ENCODE measurements at regions of chr1 and their contacts with region 1.

Region 1: DNA sequence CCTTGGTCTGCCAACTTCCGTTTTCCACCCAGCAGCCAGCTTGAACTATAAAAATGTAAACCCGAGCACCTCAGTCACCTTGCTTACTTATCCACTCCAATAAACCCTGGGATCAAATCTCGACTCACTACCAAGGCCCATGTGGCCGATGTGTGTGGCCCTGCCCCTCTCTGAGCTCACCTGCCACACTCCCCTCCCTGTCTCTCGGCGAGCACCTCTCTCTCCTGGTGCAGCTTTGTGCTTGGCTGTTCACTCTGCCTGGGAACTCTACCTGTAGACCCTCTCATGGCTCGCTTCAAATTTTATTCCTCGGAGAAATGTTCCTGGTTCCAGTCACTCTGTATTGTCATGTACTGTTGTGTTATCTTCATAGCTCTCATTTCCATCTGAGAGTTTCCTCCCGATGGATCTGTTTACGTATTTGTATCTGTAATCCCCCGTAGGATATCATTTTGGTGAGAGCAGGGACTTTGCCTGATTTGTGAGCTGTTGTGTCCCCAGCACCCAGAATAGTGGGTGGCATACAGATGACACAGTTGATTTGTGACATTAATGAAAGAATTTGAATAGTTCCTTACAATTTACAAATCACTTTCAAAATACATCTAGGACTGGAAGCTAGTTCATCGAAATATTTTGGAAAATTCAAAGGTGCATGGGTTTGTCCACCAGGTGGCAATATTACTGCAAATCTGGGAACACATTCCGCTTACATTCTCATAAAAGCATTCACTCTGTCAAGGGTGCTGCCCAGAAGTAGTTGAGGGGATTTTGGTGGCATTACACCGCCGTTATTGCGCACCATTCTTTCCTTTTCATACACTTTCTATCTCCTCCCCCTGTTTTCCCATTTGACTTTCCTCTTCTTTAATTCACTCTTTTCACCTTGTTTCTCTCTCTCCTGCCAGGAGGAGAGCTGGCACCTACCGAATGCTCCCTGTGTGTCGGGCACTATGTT is 95.3 kb downstream of the ABCA4 start:
- DNase-seq: no peak
- ATAC-seq: no peak
- H3K4me3 Mint-ChIP-seq: no peak overlapping the region
- H3K27ac Mint-ChIP-seq: no peak overlapping the region
- H3K4me1 Mint-ChIP-seq: no peaks in the 10 kb centered on the region
- H3K27me3 Mint-ChIP-seq: peaks cover 6% of the 10 kb centered on the region
- CTCF ChIP-seq: no peak

Region 2: DNA sequence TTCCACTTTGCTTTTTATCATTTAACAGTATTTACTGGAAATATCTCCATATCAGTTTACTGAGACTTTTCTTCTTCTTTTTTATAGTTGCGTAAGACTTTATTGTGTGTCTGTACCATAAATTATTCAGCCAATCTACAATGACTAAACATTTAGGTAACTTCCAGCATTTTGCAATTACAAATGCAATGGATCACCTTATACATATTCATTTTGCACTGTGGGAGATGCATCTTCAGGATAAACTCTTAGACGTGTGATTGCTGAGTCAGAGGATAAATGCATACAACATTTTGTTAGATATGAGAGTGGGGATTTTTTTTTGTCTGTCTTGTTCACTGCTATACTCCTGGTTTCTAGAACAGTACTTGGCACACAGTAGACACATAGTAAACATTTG is 20.7 kb before region 1 on chr1:
- CTCF ChIA-PET with region 1: no interaction called
- POLR2A ChIA-PET with region 1: no interaction called
- intact Hi-C with region 1: no loop called
- DNase-seq: no peak
- ATAC-seq: no peak
- H3K4me3 Mint-ChIP-seq: no peak overlapping the region
- H3K27ac Mint-ChIP-seq: no peak overlapping the region
- H3K4me1 Mint-ChIP-seq: no peaks in the 10 kb centered on the region
- H3K27me3 Mint-ChIP-seq: peaks cover 13% of the 10 kb centered on the region
- CTCF ChIP-seq: no peak

Region 3: DNA sequence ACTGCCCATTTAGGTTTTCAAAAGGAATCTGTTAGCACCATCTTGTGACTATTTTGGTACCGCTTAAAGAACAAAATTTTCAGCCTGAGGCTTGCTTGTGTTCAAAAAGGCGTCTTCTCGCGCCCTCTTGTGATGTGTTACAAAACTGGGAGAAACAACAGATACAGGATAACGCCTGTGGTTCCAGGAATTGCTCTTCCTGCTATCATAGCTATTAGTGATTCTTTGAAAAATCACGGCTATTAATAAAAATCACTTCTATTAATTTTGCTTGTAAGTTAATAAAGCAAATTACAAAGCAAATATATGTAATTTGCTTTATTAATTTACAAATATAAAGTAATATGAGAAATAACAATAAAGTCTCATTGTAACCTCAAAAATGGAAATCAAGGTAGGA is 310.3 kb after region 1 on chr1:
- CTCF ChIA-PET with region 1: interaction called, 3 read pairs
- POLR2A ChIA-PET with region 1: no interaction called
- intact Hi-C with region 1: loop called (anchors 1 kb)
- DNase-seq: no peak
- ATAC-seq: no peak
- H3K4me3 Mint-ChIP-seq: no peak overlapping the region
- H3K27ac Mint-ChIP-seq: no peak overlapping the region
- H3K4me1 Mint-ChIP-seq: no peaks in the 10 kb centered on the region
- H3K27me3 Mint-ChIP-seq: peaks cover 9% of the 10 kb centered on the region
- CTCF ChIP-seq: no peak

Measured in activated B cell treated with CpG ODN at 0.5 μM for 24 hours (primary cell).